ENCODE measurements at regions of chr12 and their contacts with region 1.

Region 1: DNA sequence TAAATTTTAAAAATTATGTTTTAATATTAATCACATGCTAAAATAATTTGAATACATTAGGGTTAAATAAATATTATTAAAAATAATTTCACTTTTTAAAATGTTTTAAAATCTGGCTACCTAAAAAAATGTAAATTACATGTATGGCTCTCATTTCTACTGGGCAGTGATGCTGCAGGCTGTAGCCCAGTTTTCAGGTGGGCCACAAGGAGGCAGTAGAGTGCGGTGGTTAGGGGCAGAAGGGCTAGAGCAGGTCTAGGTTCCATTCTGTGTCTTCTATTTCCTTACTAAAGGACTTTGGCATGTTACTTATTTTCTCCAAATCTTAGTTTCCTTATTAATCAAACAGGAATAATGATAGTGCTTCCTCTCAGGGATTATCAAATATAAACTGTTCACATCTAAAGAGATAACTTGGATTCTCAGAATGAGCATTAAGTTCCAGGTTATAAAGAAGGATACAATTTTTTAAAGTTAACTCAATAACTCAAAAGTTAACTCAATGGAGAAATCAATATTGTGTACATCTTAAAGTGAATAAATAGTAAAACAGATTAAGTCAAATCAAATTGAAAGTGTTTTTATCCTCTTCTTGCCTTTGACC is 54.9 kb upstream of the OVCH1 start:
- DNase-seq: peak; percentile 56 to 83 (median 75)
- H3K4me3 ChIP-seq: no peak overlapping the region
- H3K27ac ChIP-seq: peak overlapping the region in 2 of 5 donors; percentile 4 to 42
- H3K4me1 ChIP-seq: peaks cover 0 to 22% of the 10 kb centered on the region in 2 donors
- H3K27me3 ChIP-seq: no peaks in the 10 kb centered on the region
- CTCF ChIP-seq: peak; percentile 63 to 88 (median 80)
- POLR2A ChIP-seq: no peak

Region 2: DNA sequence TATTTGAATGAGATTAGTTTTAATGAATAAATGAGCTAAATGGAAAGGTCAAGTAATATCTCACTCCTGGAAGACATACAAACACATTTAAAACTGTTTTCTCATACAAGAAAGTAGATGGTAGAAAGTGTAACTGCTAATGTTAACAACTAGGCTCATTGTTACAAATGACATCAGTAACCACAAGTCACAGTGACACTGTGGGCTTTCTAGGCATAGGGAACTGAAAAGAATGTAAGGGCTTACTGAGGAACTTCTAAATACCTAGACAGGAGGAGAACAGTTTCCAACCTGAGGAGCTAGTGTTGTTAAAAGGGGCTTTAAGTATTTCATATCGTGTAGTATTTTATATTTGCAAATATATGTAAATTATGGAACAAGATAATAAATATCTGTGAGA is 153.9 kb before region 1 on chr12:
- intact Hi-C with region 1: no loop called
- DNase-seq: no peak
- H3K4me3 ChIP-seq: no peak overlapping the region
- H3K27ac ChIP-seq: no peak overlapping the region
- H3K4me1 ChIP-seq: no peaks in the 10 kb centered on the region
- H3K27me3 ChIP-seq: no peaks in the 10 kb centered on the region
- CTCF ChIP-seq: no peak
- POLR2A ChIP-seq: no peak

Region 3: DNA sequence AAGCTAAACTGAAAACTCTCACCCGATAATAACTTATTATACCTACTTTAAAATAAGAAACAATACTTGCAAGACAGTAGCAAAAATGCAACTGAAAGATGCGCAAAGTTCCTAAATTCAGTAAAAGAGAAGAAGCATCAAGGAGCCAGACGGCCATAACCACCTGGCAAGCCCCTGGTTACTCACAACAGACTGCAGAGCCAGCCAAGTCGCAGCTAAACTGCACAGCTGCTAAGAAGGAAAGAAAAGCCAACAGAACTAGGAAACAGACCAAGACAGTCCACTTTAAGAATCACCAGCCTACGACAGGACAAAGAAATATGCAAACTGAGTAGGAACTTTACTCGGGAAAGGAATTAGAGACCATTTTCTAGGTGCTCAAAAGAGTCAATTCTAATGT is 103.4 kb after region 1 on chr12:
- intact Hi-C with region 1: no loop called
- DNase-seq: no peak
- H3K4me3 ChIP-seq: no peak overlapping the region
- H3K27ac ChIP-seq: no peak overlapping the region
- H3K4me1 ChIP-seq: peaks cover 0 to 10% of the 10 kb centered on the region in 2 donors
- H3K27me3 ChIP-seq: no peaks in the 10 kb centered on the region
- CTCF ChIP-seq: no peak
- POLR2A ChIP-seq: no peak

Region 4: GRCh38 chr12:29782285-29782870 is 230.0 kb after region 1 on chr12:
- intact Hi-C with region 1: loop called in 1 of 2 experiments (anchors 5 kb)
- DNase-seq: peak in 2 of 7 donors; percentile 10 to 13
- H3K4me3 ChIP-seq: peak overlapping the region in 3 of 4 donors; percentile 60 to 90 (median 67)
- H3K27ac ChIP-seq: peak overlapping the region in 4 of 5 donors; percentile 66 to 90 (median 80)
- H3K4me1 ChIP-seq: peaks cover 0 to 22% of the 10 kb centered on the region in 2 donors
- H3K27me3 ChIP-seq: no peaks in the 10 kb centered on the region
- CTCF ChIP-seq: no peak
- POLR2A ChIP-seq: no peak

Region 5: GRCh38 chr12:29889737-29890136 is 337.3 kb after region 1 on chr12:
- intact Hi-C with region 1: loop called in 1 of 2 experiments (anchors 10 kb)
- DNase-seq: peak; percentile 65 to 89 (median 72)
- H3K4me3 ChIP-seq: no peak overlapping the region
- H3K27ac ChIP-seq: no peak overlapping the region
- H3K4me1 ChIP-seq: no peaks in the 10 kb centered on the region
- H3K27me3 ChIP-seq: no peaks in the 10 kb centered on the region
- CTCF ChIP-seq: peak in 5 of 6 experiments; percentile 38 to 64 (median 55)
- POLR2A ChIP-seq: no peak